A673 (cell line): ENCODE measurements at regions of chr19 and their contacts with region 1.

Region 1: DNA sequence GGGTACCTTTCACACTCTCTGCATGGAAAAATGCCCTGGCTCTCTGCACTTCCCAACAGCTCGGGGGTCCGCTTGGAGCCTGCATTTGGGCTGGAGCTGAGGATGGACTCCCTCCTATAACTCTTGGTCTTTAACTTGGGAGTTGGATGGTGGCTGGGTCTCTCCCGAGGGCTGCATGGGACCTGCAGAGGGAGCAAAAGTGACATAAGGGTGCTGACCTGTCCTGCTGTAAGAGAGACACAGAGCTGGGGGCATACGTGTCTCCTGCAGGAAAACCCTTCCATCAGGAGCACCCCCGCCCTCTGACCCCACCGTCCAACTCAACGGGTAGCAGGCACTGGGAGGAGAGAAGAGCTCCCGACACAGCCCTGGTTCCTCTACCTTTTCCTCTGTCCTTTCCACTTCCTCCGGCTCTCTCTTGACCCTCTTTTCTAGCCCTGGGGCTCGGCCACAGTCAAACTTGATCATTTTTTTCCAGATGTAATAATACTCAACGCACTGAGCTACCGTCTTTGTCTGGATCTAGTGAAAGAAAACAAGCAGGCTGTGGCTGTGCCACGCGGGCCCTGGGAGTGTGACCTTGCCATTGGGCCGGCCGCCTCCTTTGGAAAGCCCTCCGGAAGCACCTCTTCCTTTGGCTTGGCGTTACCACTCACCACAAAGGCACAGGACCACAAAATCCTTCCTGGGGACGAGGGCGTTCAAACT is 6.8 kb upstream of the NAPA start:
- DNase-seq: no peak
- H3K4me3 ChIP-seq: no peak overlapping the region
- H3K27ac ChIP-seq: no peak overlapping the region
- H3K4me1 ChIP-seq: no peaks in the 10 kb centered on the region
- H3K27me3 ChIP-seq: peaks cover 5% of the 10 kb centered on the region
- CTCF ChIP-seq: no peak

Region 2: DNA sequence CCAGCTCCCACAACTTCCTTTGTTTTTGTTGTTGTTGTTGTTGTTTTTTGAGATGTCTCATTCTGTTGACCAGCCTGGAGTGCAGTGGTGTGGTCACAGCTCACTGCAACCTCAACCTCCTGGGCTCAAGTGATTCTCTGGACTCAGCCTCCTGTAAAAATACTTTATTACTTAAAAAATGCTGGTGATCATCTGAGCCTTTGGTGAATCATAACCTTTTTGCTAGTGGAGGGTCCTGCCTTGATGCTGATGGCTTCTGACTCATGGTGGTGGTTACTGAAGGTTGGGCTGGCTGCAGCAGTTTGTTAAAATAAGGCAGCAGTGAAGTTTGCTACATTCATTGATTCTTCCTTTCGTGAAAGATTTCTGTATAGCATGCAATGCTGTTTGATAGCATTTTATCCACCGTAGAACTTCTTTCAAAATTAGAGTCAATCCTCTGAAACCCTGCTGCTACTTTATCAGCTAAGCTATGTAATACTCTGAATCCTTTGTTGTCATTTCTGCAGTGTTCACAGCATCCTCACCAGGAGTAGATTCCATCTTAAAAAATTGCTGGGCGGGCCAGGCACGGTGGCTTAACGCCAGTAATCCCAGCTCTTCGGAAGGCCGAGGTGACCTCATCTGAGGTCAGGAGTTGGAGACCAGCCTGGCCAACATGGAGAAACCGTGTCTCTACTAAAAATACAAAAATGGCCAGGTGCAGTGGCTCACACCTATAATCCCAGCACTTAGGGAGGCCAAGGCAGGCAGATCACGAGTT is 642.8 kb before region 1 on chr19:
- CTCF ChIA-PET with region 1: interaction called, 10 read pairs
- POLR2A ChIA-PET with region 1: no interaction called
- intact Hi-C with region 1: no loop called
- DNase-seq: no peak
- H3K4me3 ChIP-seq: no peak overlapping the region
- H3K27ac ChIP-seq: no peak overlapping the region
- H3K4me1 ChIP-seq: no peaks in the 10 kb centered on the region
- H3K27me3 ChIP-seq: no peaks in the 10 kb centered on the region
- CTCF ChIP-seq: no peak